Upper lobe of right lung (tissue), 1 donor: ENCODE measurements at regions of chr19 and their contacts with region 1.

Region 1: GRCh38 chr19:12847159-12848139 is 9.1 kb downstream of the MAST1 start:
- DNase-seq: peak; percentile 93
- ATAC-seq: peak; percentile 100
- H3K4me3 ChIP-seq: peak overlapping the region; percentile 5
- H3K27ac ChIP-seq: no peak overlapping the region
- H3K4me1 ChIP-seq: peaks cover 9% of the 10 kb centered on the region
- H3K27me3 ChIP-seq: peaks cover 38% of the 10 kb centered on the region
- CTCF ChIP-seq: peak; percentile 100

Region 2: DNA sequence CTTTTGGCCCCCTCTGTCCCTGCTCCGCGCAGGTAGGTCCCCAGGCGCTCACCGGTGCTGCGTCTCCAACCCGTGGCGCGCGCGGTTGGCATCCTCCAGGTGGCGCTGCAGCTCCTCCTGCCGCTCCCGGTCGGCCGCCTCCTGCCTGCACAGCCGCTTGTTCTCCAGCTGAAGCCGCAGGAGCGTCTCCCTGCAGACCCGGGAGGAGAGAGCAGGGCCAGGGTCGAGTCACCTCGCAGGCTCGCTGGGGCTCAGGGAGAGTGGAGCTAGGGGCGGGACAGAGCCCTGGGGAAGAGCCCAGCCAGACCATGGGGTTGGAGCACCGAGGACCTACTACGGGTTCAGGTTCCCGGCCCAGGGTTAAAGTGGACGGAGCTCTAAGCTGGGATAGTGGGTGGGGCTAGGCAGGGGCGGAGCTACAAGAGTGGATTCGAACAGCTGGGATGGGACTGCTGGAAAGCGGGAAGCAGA is 81.4 kb before region 1 on chr19:
- intact Hi-C with region 1: loop called (anchors 5 kb)
- DNase-seq: peak; percentile 94
- ATAC-seq: peak; percentile 93
- H3K4me3 ChIP-seq: peak overlapping the region; percentile 53
- H3K27ac ChIP-seq: peak overlapping the region; percentile 42
- H3K4me1 ChIP-seq: peaks cover 8% of the 10 kb centered on the region
- H3K27me3 ChIP-seq: no peaks in the 10 kb centered on the region
- CTCF ChIP-seq: peak; percentile 93